Activated naive CD8-positive, alpha-beta T cell treated with anti-CD3 and anti-CD28 coated beads, Interleukin-2, amount 10 ng/mL, durations not matched to agents 7 days and 5 days (primary cell): ENCODE measurements at regions of chr14 and their contacts with region 1.

Region 1: DNA sequence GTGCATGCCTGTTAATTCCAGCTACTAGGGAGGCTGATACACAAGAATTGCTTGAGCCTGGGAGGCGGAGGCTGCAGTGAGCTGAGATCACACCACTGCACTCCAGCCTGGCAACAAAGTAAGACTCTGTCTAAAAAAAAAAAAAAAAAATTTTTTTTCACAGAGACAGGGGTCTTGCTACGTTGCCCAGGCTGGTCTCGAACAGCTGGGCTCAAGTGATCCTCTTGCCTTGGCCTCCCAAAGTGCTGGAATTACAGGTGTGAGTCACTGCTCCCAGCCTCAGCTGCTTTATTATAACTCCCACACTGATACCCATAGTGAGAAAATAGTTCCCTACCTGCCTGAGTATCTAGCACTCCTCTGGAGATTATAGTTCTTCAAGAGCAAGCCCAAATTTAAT is 11.2 kb downstream of the HAUS4 start:
- DNase-seq: no peak
- ATAC-seq: no peak
- H3K4me3 Mint-ChIP-seq: no peak overlapping the region
- H3K27ac Mint-ChIP-seq: no peak overlapping the region
- H3K4me1 Mint-ChIP-seq: no peaks in the 10 kb centered on the region
- H3K27me3 Mint-ChIP-seq: no peaks in the 10 kb centered on the region

Region 2: GRCh38 chr14:22955702-22956569 is 10.3 kb after region 1 on chr14:
- POLR2A ChIA-PET with region 1: interaction called, 17 read pairs
- DNase-seq: no peak
- ATAC-seq: no peak
- H3K4me3 Mint-ChIP-seq: peak overlapping the region; percentile 89
- H3K27ac Mint-ChIP-seq: peak overlapping the region; percentile 90
- H3K4me1 Mint-ChIP-seq: peaks cover 17% of the 10 kb centered on the region
- H3K27me3 Mint-ChIP-seq: peaks cover 3% of the 10 kb centered on the region

Region 3: GRCh38 chr14:23041729-23042128 is 96.1 kb after region 1 on chr14:
- POLR2A ChIA-PET with region 1: no interaction called
- DNase-seq: no peak
- ATAC-seq: no peak
- H3K4me3 Mint-ChIP-seq: no peak overlapping the region
- H3K27ac Mint-ChIP-seq: no peak overlapping the region
- H3K4me1 Mint-ChIP-seq: peaks cover under 1% of the 10 kb centered on the region
- H3K27me3 Mint-ChIP-seq: no peaks in the 10 kb centered on the region